Panc1 (cell line): ENCODE measurements at regions of chr7 and their contacts with region 1.

Region 1: GRCh38 chr7:33109005-33109757 is at the start of gene RP9:
- DNase-seq: no peak
- ATAC-seq: peak; percentile 94
- H3K4me3 ChIP-seq: peak within 1 kb of the TSS; percentile 80 to 89
- H3K27ac ChIP-seq: peak within 1 kb of the TSS; percentile 78
- H3K4me1 ChIP-seq: peaks cover 19% of the 10 kb centered on the region
- H3K27me3 ChIP-seq: no peaks in the 10 kb centered on the region
- CTCF ChIP-seq: peak; percentile 99
- total RNA-seq, gene RP9: 22.1 TPM

Region 2: GRCh38 chr7:32765185-32765584 is 344.0 kb before region 1 on chr7:
- CTCF ChIA-PET with region 1: no interaction called
- POLR2A ChIA-PET with region 1: no interaction called
- in situ Hi-C with region 1: no loop called
- intact Hi-C with region 1: loop called (anchors 5 kb)
- DNase-seq: no peak
- ATAC-seq: no peak
- H3K4me3 ChIP-seq: no peak overlapping the region
- H3K27ac ChIP-seq: no peak overlapping the region
- H3K4me1 ChIP-seq: no peaks in the 10 kb centered on the region
- H3K27me3 ChIP-seq: no peaks in the 10 kb centered on the region
- CTCF ChIP-seq: no peak